Naive thymus-derived CD4-positive, alpha-beta T cell (primary cell): ENCODE measurements at regions of chr2 and their contacts with region 1.

Region 1: GRCh38 chr2:206800506-206801417 is 35.4 kb downstream of the FASTKD2 start:
- DNase-seq: peak in 8 of 9 donors; percentile 20 to 61 (median 53)
- ATAC-seq: peak; percentile 67
- H3K4me3 ChIP-seq: no peak overlapping the region
- H3K4me3 Mint-ChIP-seq: peak overlapping the region; percentile 52 to 85 (median 79)
- H3K27ac ChIP-seq: peak overlapping the region; percentile 23
- H3K27ac Mint-ChIP-seq: peak overlapping the region; percentile 1 to 86 (median 37)
- H3K4me1 ChIP-seq: peaks cover 0 to 4% of the 10 kb centered on the region in 2 donors
- H3K4me1 Mint-ChIP-seq: peaks cover 15 to 32% (median 24%) of the 10 kb centered on the region in 7 donors
- H3K27me3 ChIP-seq: no peaks in the 10 kb centered on the region
- H3K27me3 Mint-ChIP-seq: no peaks in the 10 kb centered on the region

Region 2: GRCh38 chr2:206856513-206856912 is 55.8 kb after region 1 on chr2:
- CTCF ChIA-PET with region 1: no interaction called
- POLR2A ChIA-PET with region 1: no interaction called
- intact Hi-C with region 1: loop called in 1 of 2 experiments (anchors 2 kb)
- DNase-seq: no peak
- ATAC-seq: no peak
- H3K4me3 ChIP-seq: no peak overlapping the region
- H3K4me3 Mint-ChIP-seq: no peak overlapping the region
- H3K27ac ChIP-seq: no peak overlapping the region
- H3K27ac Mint-ChIP-seq: peak overlapping the region in 2 of 9 donors; percentile 23 to 60
- H3K4me1 ChIP-seq: peaks cover 7 to 18% of the 10 kb centered on the region in 2 donors
- H3K4me1 Mint-ChIP-seq: peaks cover 19 to 33% (median 25%) of the 10 kb centered on the region in 7 donors
- H3K27me3 ChIP-seq: no peaks in the 10 kb centered on the region
- H3K27me3 Mint-ChIP-seq: no peaks in the 10 kb centered on the region

Region 3: GRCh38 chr2:207046724-207047123 is 246.0 kb after region 1 on chr2:
- CTCF ChIA-PET with region 1: interaction called, 5 read pairs
- POLR2A ChIA-PET with region 1: no interaction called
- intact Hi-C with region 1: loop called (anchors 1 to 2 kb)
- DNase-seq: peak in 8 of 9 donors; percentile 24 to 69 (median 52)
- ATAC-seq: peak; percentile 79
- H3K4me3 ChIP-seq: no peak overlapping the region
- H3K4me3 Mint-ChIP-seq: peak overlapping the region in 8 of 10 donors; percentile 0 to 66 (median 12)
- H3K27ac ChIP-seq: no peak overlapping the region
- H3K27ac Mint-ChIP-seq: peak overlapping the region; percentile 2 to 78 (median 56)
- H3K4me1 ChIP-seq: peaks cover 0 to 4% of the 10 kb centered on the region in 2 donors
- H3K4me1 Mint-ChIP-seq: peaks cover 11 to 14% (median 13%) of the 10 kb centered on the region in 7 donors
- H3K27me3 ChIP-seq: no peaks in the 10 kb centered on the region
- H3K27me3 Mint-ChIP-seq: peaks cover 0 to 16% (median 0%) of the 10 kb centered on the region in 5 donors

Region 4: GRCh38 chr2:207352978-207353671 is 552.4 kb after region 1 on chr2:
- CTCF ChIA-PET with region 1: no interaction called
- POLR2A ChIA-PET with region 1: no interaction called
- intact Hi-C with region 1: loop called (anchors 5 kb)
- DNase-seq: peak in 5 of 9 donors; percentile 8 to 37 (median 32)
- ATAC-seq: peak; percentile 51
- H3K4me3 ChIP-seq: no peak overlapping the region
- H3K4me3 Mint-ChIP-seq: peak overlapping the region in 2 of 10 donors; percentile 17 to 26
- H3K27ac ChIP-seq: no peak overlapping the region
- H3K27ac Mint-ChIP-seq: peak overlapping the region in 3 of 9 donors; percentile 6 to 65 (median 53)
- H3K4me1 ChIP-seq: no peaks in the 10 kb centered on the region
- H3K4me1 Mint-ChIP-seq: peaks cover 0 to 12% (median 9%) of the 10 kb centered on the region in 7 donors
- H3K27me3 ChIP-seq: no peaks in the 10 kb centered on the region
- H3K27me3 Mint-ChIP-seq: no peaks in the 10 kb centered on the region

Region 5: GRCh38 chr2:207974216-207974605 is 1173.4 kb after region 1 on chr2:
- CTCF ChIA-PET with region 1: interaction called, 3 read pairs
- POLR2A ChIA-PET with region 1: no interaction called
- intact Hi-C with region 1: loop called in 1 of 2 experiments (anchors 5 kb)
- DNase-seq: no peak
- ATAC-seq: peak; percentile 34
- H3K4me3 ChIP-seq: no peak overlapping the region
- H3K4me3 Mint-ChIP-seq: no peak overlapping the region
- H3K27ac ChIP-seq: no peak overlapping the region
- H3K27ac Mint-ChIP-seq: peak overlapping the region in 2 of 9 donors; percentile 2 to 65
- H3K4me1 ChIP-seq: no peaks in the 10 kb centered on the region
- H3K4me1 Mint-ChIP-seq: peaks cover 5 to 43% (median 31%) of the 10 kb centered on the region in 7 donors
- H3K27me3 ChIP-seq: no peaks in the 10 kb centered on the region
- H3K27me3 Mint-ChIP-seq: no peaks in the 10 kb centered on the region

Region 6: GRCh38 chr2:208086029-208086428 is 1285.3 kb after region 1 on chr2:
- CTCF ChIA-PET with region 1: no interaction called
- POLR2A ChIA-PET with region 1: no interaction called
- intact Hi-C with region 1: no loop called
- DNase-seq: no peak
- ATAC-seq: no peak
- H3K4me3 ChIP-seq: no peak overlapping the region
- H3K4me3 Mint-ChIP-seq: no peak overlapping the region
- H3K27ac ChIP-seq: no peak overlapping the region
- H3K27ac Mint-ChIP-seq: no peak overlapping the region
- H3K4me1 ChIP-seq: no peaks in the 10 kb centered on the region
- H3K4me1 Mint-ChIP-seq: no peaks in the 10 kb centered on the region
- H3K27me3 ChIP-seq: no peaks in the 10 kb centered on the region
- H3K27me3 Mint-ChIP-seq: peaks cover 3 to 17% (median 10%) of the 10 kb centered on the region in 5 donors